ENCODE measurements at regions of chr5 and their contacts with region 1.

Region 1: GRCh38 chr5:75236322-75237316 is at the start of gene ANKRD31:
- DNase-seq: peak; percentile 77 to 89
- ATAC-seq: peak; percentile 100
- H3K4me3 ChIP-seq: peak within 1 kb of the TSS; percentile 32 to 85 (median 66)
- H3K27ac ChIP-seq: peak within 1 kb of the TSS in 8 of 10 donors; percentile 17 to 85 (median 57)
- H3K4me1 ChIP-seq: peaks cover 0 to 14% (median 11%) of the 10 kb centered on the region in 9 donors
- H3K27me3 ChIP-seq: no peaks in the 10 kb centered on the region
- CTCF ChIP-seq: peak; percentile 68 to 96 (median 92)
- total RNA-seq, gene ANKRD31: 0.05 to 0.18 (median 0.11) TPM in 7 of 10 donors, not detected in the others

Region 2: GRCh38 chr5:74521401-74521800 is 715.2 kb before region 1 on chr5:
- intact Hi-C with region 1: loop called in 1 of 10 experiments (anchors 5 kb)
- DNase-seq: no peak
- ATAC-seq: no peak
- H3K4me3 ChIP-seq: no peak overlapping the region
- H3K27ac ChIP-seq: no peak overlapping the region
- H3K4me1 ChIP-seq: peaks cover 0 to 19% (median 0%) of the 10 kb centered on the region in 9 donors
- H3K27me3 ChIP-seq: no peaks in the 10 kb centered on the region
- CTCF ChIP-seq: no peak

Region 3: GRCh38 chr5:75281716-75282465 is 45.3 kb after region 1 on chr5:
- intact Hi-C with region 1: no loop called
- DNase-seq: no peak
- ATAC-seq: no peak
- H3K4me3 ChIP-seq: no peak overlapping the region
- H3K27ac ChIP-seq: no peak overlapping the region
- H3K4me1 ChIP-seq: no peaks in the 10 kb centered on the region
- H3K27me3 ChIP-seq: peaks cover 0 to 5% (median 0%) of the 10 kb centered on the region in 7 donors
- CTCF ChIP-seq: no peak

Region 4: DNA sequence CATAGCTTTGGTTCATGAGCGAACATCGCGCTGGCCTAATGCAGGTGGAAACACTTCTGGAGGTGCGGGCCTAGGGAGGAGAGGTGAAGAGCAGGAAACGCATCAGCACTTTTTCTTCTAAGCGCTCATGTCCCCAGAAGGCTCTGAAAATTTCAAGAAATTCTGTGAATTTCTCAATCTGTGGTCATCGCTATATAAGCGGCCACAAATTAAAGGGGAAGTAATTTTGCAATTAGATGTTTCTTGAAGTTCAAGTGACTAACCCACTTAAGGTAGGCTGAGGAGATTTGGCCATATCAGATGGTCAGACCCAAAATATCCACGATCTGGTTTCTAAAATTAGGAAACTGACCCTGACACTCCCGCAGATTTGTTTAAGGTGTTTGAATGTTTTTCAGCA is 83.7 kb after region 1 on chr5:
- intact Hi-C with region 1: loop called in 1 of 10 experiments (anchors 10 kb)
- DNase-seq: no peak
- ATAC-seq: peak in 2 of 8 donors; percentile 27 to 35
- H3K4me3 ChIP-seq: no peak overlapping the region
- H3K27ac ChIP-seq: peak overlapping the region in 2 of 10 donors; percentile 44 to 70
- H3K4me1 ChIP-seq: peaks cover 0 to 38% (median 0%) of the 10 kb centered on the region in 9 donors
- H3K27me3 ChIP-seq: peaks cover 0 to 5% (median 0%) of the 10 kb centered on the region in 7 donors
- CTCF ChIP-seq: no peak

Region 5: DNA sequence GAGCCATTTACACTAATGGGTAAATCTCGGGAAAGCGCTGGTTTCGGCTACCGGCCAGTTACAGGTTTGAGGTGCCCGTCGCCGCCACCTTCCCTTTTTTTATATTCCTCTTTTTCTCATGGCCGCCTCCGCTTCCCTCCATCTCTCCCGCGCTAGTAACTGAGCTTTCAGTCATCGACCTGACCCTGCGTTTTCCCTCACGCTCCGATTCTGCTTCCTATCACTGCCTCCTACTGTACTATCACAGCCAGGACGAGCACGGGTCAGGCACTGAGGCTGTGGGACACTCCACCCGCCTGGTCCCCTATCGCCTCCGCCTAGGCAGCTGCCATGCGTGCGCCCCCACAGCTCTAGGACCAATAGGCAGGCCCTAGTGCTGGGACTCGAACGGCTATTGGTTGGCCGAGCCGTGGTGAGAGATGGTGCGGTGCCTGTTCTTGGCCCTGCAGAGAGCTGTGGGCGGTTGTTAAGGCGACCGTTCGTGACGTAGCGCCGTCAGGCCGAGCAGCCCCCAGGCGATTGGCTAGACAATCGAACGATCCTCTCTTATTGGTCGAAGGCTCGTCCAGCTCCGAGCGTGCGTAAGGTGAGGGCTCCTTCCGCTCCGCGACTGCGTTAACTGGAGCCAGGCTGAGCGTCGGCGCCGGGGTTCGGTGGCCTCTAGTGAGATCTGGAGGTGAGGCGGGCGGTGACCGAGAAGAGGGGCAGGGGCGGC is 100.2 kb after region 1 on chr5 and contains the start of gene HMGCR:
- intact Hi-C with region 1: loop called in 6 of 10 experiments (anchors 2 to 10 kb)
- DNase-seq: peak; percentile 97 to 99
- ATAC-seq: peak; percentile 99 to 100 (median 99)
- H3K4me3 ChIP-seq: peak within 1 kb of the TSS; percentile 72 to 99 (median 90)
- H3K27ac ChIP-seq: peak within 1 kb of the TSS; percentile 37 to 95 (median 90)
- H3K4me1 ChIP-seq: peaks cover 2 to 28% (median 18%) of the 10 kb centered on the region in 9 donors
- H3K27me3 ChIP-seq: no peaks in the 10 kb centered on the region
- CTCF ChIP-seq: peak in 5 of 9 donors; percentile 5 to 53 (median 41)
- total RNA-seq, gene HMGCR: 9.8 to 16.3 (median 11.4) TPM

Region 6: GRCh38 chr5:75511435-75512384 is 275.1 kb after region 1 on chr5 and contains the starts of genes CERT1 and POLK:
- intact Hi-C with region 1: no loop called
- DNase-seq: peak; percentile 97 to 99
- ATAC-seq: peak; percentile 97 to 99 (median 98)
- H3K4me3 ChIP-seq: peak within 1 kb of the TSS; percentile 68 to 93 (median 86)
- H3K27ac ChIP-seq: peak within 1 kb of the TSS; percentile 84 to 96 (median 94)
- H3K4me1 ChIP-seq: peaks cover 0 to 61% (median 52%) of the 10 kb centered on the region in 9 donors
- H3K27me3 ChIP-seq: no peaks in the 10 kb centered on the region
- CTCF ChIP-seq: no peak
- total RNA-seq, gene CERT1: 23.1 to 47.6 (median 37.9) TPM
- total RNA-seq, gene POLK: 18.4 to 27.2 (median 23.8) TPM

Region 7: DNA sequence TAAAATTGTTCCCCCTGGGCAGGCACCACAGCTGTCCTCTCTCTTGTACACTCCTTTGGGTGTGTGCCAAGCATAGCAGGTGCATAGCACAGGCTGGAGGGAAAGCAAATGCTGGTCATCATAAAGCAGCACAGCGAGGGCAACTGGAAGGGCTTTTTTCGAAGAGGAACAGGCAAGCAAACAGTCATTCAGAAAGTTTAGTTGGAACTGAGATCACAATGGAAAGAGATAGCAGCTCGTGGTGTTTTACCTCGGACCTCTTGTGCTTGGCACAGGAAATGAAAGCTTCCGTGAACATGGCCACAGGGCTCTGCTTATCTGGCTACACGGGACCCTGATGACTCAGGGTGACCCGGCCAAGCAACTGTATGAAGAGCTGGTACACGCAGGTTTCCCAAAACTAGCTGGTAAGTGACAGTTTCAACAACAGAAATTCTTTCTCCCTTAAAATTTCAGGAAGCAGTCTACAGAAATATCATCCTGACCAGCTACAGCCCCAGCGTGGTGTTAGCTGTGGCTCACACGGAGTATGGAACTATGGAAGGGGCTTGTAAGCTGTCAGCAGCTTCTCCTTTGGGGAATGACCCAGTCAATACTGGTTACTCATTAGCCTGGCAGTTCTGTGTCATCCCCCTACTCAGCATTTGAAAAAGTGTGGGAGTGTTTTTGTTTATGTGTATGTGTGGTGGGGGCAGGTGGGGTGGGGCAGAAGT is 432.5 kb after region 1 on chr5:
- intact Hi-C with region 1: loop called in 2 of 10 experiments (anchors 10 kb)
- DNase-seq: peak in 1 of 2 donors; percentile 29
- ATAC-seq: peak; percentile 64 to 90 (median 73)
- H3K4me3 ChIP-seq: peak overlapping the region in 6 of 10 donors; percentile 18 to 39 (median 26)
- H3K27ac ChIP-seq: peak overlapping the region in 3 of 10 donors; percentile 1 to 45 (median 21)
- H3K4me1 ChIP-seq: peaks cover 0 to 21% (median 12%) of the 10 kb centered on the region in 9 donors
- H3K27me3 ChIP-seq: no peaks in the 10 kb centered on the region
- CTCF ChIP-seq: no peak

Region 8: GRCh38 chr5:75681125-75681830 is 444.7 kb after region 1 on chr5:
- intact Hi-C with region 1: loop called (anchors 2 to 10 kb)
- DNase-seq: no peak
- ATAC-seq: peak in 2 of 8 donors; percentile 16 to 37
- H3K4me3 ChIP-seq: no peak overlapping the region
- H3K27ac ChIP-seq: peak overlapping the region in 1 of 10 donors; percentile 1
- H3K4me1 ChIP-seq: peaks cover 0 to 12% (median 0%) of the 10 kb centered on the region in 9 donors
- H3K27me3 ChIP-seq: no peaks in the 10 kb centered on the region
- CTCF ChIP-seq: peak; percentile 60 to 89 (median 78)

Region 9: GRCh38 chr5:76256116-76256889 is 1019.7 kb after region 1 on chr5:
- intact Hi-C with region 1: loop called in 3 of 10 experiments (anchors 5 to 10 kb)
- DNase-seq: peak in 1 of 2 donors; percentile 56
- ATAC-seq: peak; percentile 73 to 98 (median 92)
- H3K4me3 ChIP-seq: no peak overlapping the region
- H3K27ac ChIP-seq: no peak overlapping the region
- H3K4me1 ChIP-seq: peaks cover 0 to 9% (median 4%) of the 10 kb centered on the region in 9 donors
- H3K27me3 ChIP-seq: peaks cover 0 to 7% (median 0%) of the 10 kb centered on the region in 7 donors
- CTCF ChIP-seq: peak; percentile 18 to 75 (median 68)